ENCODE measurements at regions of chr18 and their contacts with region 1.

Region 1: DNA sequence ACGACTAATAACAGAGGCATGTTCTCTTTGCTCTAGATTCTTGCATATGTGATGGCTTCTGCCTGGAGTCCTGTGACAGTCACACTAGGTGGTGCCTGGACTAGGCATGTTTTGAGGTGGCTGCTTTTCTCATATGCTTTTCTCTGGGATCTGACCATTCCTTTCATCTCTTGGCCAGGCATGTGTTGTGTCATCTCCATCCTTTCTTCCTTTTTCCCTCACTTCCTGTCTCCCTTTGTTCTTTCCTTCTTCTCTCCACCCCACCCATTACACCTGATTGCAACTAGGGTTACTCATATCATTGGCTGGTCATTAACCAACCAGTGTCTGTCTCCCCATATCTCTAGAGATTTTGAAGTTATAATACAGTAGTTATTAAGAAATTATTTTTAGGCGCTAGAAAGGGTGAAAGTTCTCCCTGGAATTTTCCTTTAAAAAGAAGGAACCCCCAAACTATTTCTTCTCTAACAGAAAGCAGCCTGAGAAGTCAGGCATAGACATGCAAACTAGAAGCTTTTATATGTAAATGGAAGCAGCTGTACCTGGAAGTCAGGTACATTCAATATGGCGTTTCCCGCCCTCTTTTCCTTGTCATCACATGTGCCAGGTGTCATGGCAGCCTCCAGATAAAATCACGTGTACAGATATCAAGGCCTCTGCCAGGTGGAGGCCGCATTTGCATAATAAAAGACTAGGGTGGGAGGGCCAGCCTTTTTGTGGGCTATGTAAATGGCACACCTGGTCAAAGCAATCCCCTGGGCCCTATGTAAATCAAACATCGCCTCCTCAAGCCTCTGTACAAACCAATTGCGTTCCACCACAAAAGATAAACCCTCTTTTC is 220.4 kb upstream of the MEX3C start:
- DNase-seq: no peak
- ATAC-seq: no peak
- H3K4me3 ChIP-seq: no peak overlapping the region
- H3K27ac ChIP-seq: no peak overlapping the region
- H3K4me1 ChIP-seq: no peaks in the 10 kb centered on the region
- H3K27me3 ChIP-seq: no peaks in the 10 kb centered on the region
- CTCF ChIP-seq: no peak

Region 2: DNA sequence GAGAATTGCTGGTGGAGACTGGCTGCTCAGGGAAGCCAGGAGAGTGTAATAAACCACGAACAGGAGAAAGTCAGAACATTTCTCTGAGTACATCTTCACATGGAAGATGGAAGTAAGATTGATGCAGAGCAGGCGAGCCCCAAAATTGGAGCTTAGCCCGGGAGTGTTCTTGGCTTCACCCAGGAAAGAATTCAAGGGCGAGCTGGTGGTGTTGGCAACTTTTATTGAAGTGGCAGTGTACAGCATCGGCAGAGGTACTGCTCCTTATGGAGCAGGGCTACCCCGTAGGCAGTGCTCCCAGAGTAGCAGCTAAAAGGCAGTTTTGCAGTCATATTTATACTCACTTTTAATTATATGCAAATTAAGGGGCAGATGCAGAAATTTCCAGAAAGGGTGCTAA is 61.0 kb after region 1 on chr18:
- intact Hi-C with region 1: loop called in 1 of 10 experiments (anchors 10 kb)
- DNase-seq: peak; percentile 8 to 12
- ATAC-seq: peak in 7 of 8 donors; percentile 25 to 78 (median 61)
- H3K4me3 ChIP-seq: no peak overlapping the region
- H3K27ac ChIP-seq: peak overlapping the region in 2 of 10 donors; percentile 30 to 73
- H3K4me1 ChIP-seq: peaks cover 0 to 17% (median 0%) of the 10 kb centered on the region in 9 donors
- H3K27me3 ChIP-seq: peaks cover 0 to 3% (median 0%) of the 10 kb centered on the region in 7 donors
- CTCF ChIP-seq: no peak